ENCODE measurements at regions of chr9 and their contacts with region 1.

Region 1: GRCh38 chr9:105608721-105609598 is 51.0 kb downstream of the FKTN start:
- H3K4me3 ChIP-seq: no peak overlapping the region
- H3K27ac ChIP-seq: no peak overlapping the region
- H3K4me1 ChIP-seq: no peaks in the 10 kb centered on the region
- CTCF ChIP-seq: no peak

Region 2: GRCh38 chr9:105621001-105621400 is 12.0 kb after region 1 on chr9:
- CTCF ChIA-PET with region 1: interaction called, 11 read pairs
- POLR2A ChIA-PET with region 1: no interaction called
- H3K4me3 ChIP-seq: no peak overlapping the region
- H3K27ac ChIP-seq: no peak overlapping the region
- H3K4me1 ChIP-seq: no peaks in the 10 kb centered on the region
- CTCF ChIP-seq: no peak

Region 3: GRCh38 chr9:105712773-105713172 is 103.8 kb after region 1 on chr9:
- CTCF ChIA-PET with region 1: interaction called, 27 read pairs
- POLR2A ChIA-PET with region 1: no interaction called
- H3K4me3 ChIP-seq: no peak overlapping the region
- H3K27ac ChIP-seq: no peak overlapping the region
- H3K4me1 ChIP-seq: no peaks in the 10 kb centered on the region
- CTCF ChIP-seq: no peak